ENCODE measurements at regions of chr2 and their contacts with region 1.

Region 1: DNA sequence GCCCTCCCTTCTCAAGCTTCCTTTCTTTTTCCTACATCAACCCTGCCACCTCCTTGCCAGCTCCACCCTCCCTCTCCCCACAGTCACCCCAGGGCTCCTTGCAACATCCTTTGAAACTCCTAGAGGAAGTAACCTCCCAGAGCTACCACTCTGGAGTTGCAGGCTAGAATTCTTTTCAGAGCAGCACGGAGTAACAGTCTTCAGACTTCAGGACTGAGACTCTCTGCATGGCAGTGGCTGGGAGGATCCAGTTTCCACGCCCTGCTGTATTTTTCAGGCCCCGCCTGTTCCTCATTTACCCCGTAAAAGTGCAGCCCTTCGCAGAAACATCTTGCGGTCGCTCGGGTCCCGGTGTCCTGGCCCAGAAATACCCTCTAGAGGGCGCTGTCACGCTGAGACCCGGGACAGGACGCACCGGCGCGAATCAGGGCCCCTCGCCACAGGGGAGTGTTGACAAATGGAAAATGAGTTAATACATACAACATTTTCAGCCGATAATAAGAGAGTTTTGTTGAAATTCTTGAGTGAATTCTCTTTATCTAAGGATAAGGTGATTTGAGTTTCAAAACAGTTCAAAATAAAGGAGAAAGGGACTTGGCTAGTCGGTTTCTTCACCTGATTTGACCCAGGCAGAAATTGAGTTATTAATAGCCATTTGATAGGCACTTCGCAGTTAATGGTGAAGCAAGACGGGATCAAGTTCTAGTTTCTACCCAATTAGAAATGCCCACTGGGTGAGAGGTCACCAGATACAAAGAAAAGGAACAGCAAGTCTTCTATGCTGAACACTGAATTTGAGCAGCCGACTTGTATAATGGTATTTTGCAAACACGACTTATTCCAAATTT is 18.5 kb upstream of the NTSR2 start:
- DNase-seq: peak; percentile 17
- H3K4me3 ChIP-seq: peak overlapping the region; percentile 36
- CTCF ChIP-seq: peak; percentile 85

Region 2: DNA sequence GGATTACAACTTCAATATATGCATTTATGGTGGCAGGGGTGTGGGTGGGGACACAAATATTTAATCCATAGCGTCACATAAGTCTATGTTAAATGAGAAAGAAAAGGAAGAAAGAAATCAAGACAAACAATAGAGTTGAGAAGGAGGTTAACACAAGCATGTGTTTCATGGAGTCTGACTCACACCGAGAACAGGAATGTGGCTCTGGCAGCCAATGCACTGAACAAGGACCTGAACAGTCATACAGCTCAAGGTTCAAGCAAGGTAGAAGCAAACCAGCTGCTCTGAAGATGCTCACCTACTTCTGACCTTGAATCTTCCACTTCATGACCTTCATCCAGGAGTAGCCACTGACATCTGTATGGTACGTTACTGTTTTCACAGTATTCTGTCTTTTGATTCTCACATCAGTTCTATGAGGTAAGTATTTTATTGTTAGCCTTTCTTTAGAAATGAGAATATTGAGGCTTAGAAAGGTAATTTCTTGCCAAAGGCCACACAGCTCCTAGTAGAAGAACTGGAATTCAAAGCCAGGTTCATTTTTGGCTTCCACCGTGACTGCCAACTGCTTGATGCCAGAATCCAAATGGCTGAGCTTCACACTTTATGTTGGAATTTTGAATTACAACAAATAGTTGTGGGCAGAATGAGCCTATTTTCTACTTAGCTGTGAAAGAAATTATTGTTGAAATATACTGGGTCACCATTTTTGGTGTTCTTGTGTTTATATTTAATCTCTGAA is 22.0 kb after region 1 on chr2:
- CTCF ChIA-PET with region 1: interaction called, 37 read pairs
- POLR2A ChIA-PET with region 1: no interaction called
- DNase-seq: no peak
- H3K4me3 ChIP-seq: no peak overlapping the region
- CTCF ChIP-seq: no peak

Measured in AG04449 (cell line).